ENCODE measurements at regions of chr18 and their contacts with region 1.

Region 1: DNA sequence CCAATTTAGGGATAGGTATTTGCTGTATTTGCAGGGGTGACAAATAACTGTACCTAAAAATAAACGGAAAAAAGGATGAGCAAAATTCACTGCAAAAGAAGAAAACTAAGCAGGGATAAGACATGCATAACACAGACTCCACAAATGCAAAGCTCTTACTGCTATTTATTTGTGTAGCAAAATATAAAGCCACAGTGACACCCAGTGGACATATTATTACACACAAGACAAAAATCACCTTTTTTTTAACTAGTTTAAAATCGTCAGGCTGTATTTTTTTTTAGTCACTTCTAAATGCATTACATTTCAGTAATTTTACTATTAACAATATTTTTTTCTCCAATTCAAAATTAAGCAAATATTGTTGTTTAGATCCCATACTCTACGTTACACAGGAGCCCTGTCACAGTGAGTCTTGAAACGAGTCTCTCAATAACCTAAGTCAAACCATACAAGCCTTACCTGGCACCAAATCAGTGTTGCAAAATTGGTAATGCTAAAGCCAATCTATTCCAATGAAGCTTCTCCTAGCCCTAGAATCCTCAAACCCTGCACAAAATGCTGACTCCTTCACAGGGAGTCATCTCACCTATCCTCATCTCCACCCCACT is 23.7 kb downstream of the METTL4 start:
- DNase-seq: peak; percentile 23
- CTCF ChIP-seq: peak; percentile 57

Region 2: GRCh38 chr18:2337552-2338141 is 209.9 kb before region 1 on chr18:
- CTCF ChIA-PET with region 1: interaction called, 22 read pairs
- POLR2A ChIA-PET with region 1: no interaction called
- DNase-seq: peak; percentile 38
- CTCF ChIP-seq: peak; percentile 59

Region 3: DNA sequence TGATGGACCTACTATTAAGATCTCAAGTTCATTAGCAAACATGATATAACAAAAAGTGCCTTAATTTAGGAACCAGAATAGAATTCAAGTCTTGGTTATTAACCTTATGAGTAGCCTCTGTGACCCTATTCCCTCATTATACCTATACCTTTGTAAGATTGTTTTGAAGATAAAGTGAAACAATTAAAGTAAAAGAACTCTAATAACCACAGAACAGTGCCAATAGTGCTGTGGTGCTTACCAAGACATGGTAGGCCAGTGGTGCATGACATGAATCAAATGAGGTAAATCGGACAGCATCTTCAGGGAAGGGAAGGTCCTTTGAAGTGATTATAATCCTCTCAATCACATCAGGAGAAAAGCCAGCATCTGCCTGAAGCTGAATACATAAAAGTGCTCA is 12.7 kb before region 1 on chr18:
- CTCF ChIA-PET with region 1: interaction called, 10 read pairs
- POLR2A ChIA-PET with region 1: no interaction called
- DNase-seq: no peak
- CTCF ChIP-seq: no peak

Region 4: GRCh38 chr18:2564373-2564772 is 16.8 kb after region 1 on chr18:
- CTCF ChIA-PET with region 1: interaction called, 13 read pairs
- POLR2A ChIA-PET with region 1: no interaction called
- DNase-seq: no peak
- CTCF ChIP-seq: no peak